Heart right ventricle (tissue), 16 donors: ENCODE measurements at regions of chr1 and their contacts with region 1.

Region 1: DNA sequence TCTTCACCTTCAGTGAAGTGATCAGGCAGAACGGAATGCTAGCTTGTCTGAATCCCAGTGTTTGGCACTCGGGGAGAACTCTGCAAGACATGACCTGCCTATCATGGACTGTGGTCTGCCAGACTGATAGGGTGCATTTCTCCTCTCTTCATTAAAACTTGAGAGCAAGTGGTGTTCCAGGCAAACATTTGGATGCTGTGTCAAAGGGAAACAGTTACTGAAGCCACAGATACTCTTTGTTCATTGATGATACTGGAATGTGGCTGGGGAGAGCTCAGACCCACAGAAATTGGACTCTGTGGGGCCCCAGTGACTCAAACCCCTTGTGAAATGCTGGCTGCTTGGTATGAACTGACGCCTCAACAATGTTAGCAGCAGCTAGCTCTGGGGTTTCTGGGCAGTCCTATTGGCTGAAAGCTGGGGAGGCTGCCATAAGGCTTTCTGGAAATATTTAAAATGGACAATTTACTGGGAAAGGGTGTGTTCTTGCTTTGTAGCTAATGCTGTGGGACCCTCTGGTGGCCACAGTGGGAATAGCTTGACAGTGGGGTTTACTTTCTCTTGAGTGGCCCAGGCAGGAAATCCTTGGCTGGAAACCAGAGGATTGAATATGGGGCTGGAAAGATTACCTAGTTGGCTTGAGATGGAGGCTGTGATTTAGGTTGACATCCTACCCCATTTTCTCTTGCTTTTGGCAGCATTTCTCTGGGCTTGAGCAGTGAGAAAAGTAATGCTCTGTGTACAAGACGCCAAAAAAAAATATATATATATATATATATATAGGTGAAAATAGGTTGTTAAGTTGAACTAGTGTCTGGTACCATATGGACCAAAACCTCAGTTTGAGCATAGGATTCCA is 8.0 kb upstream of the S100A10 start:
- DNase-seq: peak; percentile 80 to 91
- ATAC-seq: peak in 7 of 8 donors; percentile 53 to 78 (median 64)
- H3K4me3 ChIP-seq: no peak overlapping the region
- H3K27ac ChIP-seq: peak overlapping the region in 7 of 10 donors; percentile 23 to 79 (median 44)
- H3K4me1 ChIP-seq: peaks cover 0 to 34% (median 10%) of the 10 kb centered on the region in 9 donors
- H3K27me3 ChIP-seq: no peaks in the 10 kb centered on the region
- CTCF ChIP-seq: peak; percentile 90 to 97 (median 92)

Region 2: DNA sequence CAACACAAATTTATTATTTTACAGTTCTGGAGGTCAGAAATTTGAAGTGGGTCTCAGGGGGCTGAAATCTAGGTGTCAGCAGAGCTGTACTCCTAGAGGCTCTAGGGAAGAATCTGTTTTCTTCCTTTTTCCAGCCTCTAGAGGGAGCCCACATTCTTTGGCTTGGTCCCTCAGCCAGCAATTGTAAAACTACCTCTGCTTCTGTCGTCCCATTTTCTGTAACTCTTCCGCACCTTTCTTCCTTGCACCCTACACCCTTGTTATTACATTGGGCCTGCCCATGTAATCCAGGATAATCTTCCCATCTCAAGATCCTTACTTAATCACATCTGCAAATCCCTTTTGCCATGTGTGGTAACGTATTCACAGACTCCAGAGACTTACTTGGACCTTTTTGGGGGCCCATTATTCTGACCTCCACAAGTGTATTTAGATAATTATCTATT is 67.5 kb before region 1 on chr1:
- intact Hi-C with region 1: loop called in 8 of 10 experiments (anchors 1 to 5 kb)
- DNase-seq: peak in 1 of 2 donors; percentile 55
- ATAC-seq: peak; percentile 78 to 92 (median 89)
- H3K4me3 ChIP-seq: no peak overlapping the region
- H3K27ac ChIP-seq: no peak overlapping the region
- H3K4me1 ChIP-seq: peaks cover 0 to 4% (median 0%) of the 10 kb centered on the region in 9 donors
- H3K27me3 ChIP-seq: no peaks in the 10 kb centered on the region
- CTCF ChIP-seq: peak; percentile 83 to 96 (median 87)

Region 3: GRCh38 chr1:151961833-151962232 is 39.8 kb before region 1 on chr1:
- intact Hi-C with region 1: loop called in 4 of 10 experiments (anchors 2 to 5 kb)
- DNase-seq: no peak
- ATAC-seq: peak in 2 of 8 donors; percentile 13 to 42
- H3K4me3 ChIP-seq: no peak overlapping the region
- H3K27ac ChIP-seq: peak overlapping the region in 3 of 10 donors; percentile 31 to 39 (median 33)
- H3K4me1 ChIP-seq: peaks cover 0 to 41% (median 25%) of the 10 kb centered on the region in 9 donors
- H3K27me3 ChIP-seq: no peaks in the 10 kb centered on the region
- CTCF ChIP-seq: peak in 2 of 9 donors; percentile 13 to 19

Region 4: GRCh38 chr1:151968058-151968457 is 33.6 kb before region 1 on chr1:
- intact Hi-C with region 1: loop called in 7 of 10 experiments (anchors 1 to 5 kb)
- DNase-seq: peak in 1 of 2 donors; percentile 36
- ATAC-seq: peak; percentile 47 to 83 (median 64)
- H3K4me3 ChIP-seq: no peak overlapping the region
- H3K27ac ChIP-seq: no peak overlapping the region
- H3K4me1 ChIP-seq: peaks cover 0 to 57% (median 26%) of the 10 kb centered on the region in 9 donors
- H3K27me3 ChIP-seq: no peaks in the 10 kb centered on the region
- CTCF ChIP-seq: peak; percentile 55 to 79 (median 76)